Activated CD4-positive, alpha-beta T cell treated with anti-CD3 and anti-CD28 coated beads for 36 hours (primary cell): ENCODE measurements at regions of chr2 and their contacts with region 1.

Region 1: GRCh38 chr2:108594132-108594981 is 60.1 kb downstream of the LIMS1 start:
- DNase-seq: peak; percentile 25
- ATAC-seq: peak; percentile 86
- H3K4me3 Mint-ChIP-seq: peak overlapping the region; percentile 59
- H3K27ac Mint-ChIP-seq: peak overlapping the region; percentile 83
- H3K4me1 Mint-ChIP-seq: peaks cover 56% of the 10 kb centered on the region
- H3K27me3 Mint-ChIP-seq: no peaks in the 10 kb centered on the region

Region 2: DNA sequence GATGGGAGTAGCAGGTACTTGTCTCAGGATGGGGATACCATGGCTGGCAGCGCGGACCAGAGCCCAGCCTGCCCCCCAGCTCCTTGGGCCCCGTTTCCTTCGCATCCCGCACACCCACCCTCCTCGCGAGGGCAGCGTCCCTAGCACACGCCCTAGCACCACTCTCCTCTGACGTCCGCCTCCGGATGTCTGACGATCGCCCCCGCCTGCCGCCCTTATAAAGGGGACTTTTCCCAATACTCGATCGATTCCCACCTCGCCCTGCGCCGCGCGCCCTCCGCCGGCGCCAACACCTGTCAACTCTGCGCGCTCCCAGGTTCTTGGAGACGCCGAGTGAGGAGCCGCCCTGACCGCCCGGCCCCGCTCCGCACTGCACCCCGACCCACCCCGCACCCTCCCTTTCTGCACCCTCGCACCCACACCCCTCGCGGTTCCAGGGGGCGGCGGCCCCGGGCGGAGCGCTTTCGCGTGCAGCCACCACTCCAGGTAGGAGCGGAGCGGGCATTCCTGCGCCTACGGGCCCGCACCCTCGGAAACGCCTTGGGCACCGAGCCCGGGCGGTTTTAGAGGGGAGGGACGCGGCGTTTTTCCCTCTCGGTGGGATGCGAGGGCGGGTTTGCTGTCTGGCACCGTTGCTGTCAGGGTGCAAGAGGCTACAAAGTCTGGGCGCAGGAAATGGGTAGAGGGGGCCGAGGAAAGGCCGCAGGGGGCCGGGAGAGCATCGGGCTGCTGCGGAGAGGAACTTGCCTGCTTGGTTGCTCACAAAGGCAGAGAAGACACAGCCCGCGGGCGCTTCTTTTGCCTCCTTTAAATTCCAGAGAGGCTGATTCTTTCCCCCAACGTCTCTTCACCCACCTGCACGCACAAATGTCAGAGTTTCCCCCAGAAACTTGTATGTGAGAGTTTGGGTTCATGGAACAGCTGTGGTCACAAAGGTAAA is 607.8 kb before region 1 on chr2 and contains the start of gene SLC5A7:
- CTCF ChIA-PET with region 1: no interaction called
- POLR2A ChIA-PET with region 1: no interaction called
- intact Hi-C with region 1: no loop called
- DNase-seq: no peak
- ATAC-seq: no peak
- H3K4me3 Mint-ChIP-seq: no peak within 1 kb of the TSS
- H3K27ac Mint-ChIP-seq: no peak within 1 kb of the TSS
- H3K4me1 Mint-ChIP-seq: no peaks in the 10 kb centered on the region
- H3K27me3 Mint-ChIP-seq: peaks cover 16% of the 10 kb centered on the region
- total RNA-seq, gene SLC5A7: not detected

Region 3: DNA sequence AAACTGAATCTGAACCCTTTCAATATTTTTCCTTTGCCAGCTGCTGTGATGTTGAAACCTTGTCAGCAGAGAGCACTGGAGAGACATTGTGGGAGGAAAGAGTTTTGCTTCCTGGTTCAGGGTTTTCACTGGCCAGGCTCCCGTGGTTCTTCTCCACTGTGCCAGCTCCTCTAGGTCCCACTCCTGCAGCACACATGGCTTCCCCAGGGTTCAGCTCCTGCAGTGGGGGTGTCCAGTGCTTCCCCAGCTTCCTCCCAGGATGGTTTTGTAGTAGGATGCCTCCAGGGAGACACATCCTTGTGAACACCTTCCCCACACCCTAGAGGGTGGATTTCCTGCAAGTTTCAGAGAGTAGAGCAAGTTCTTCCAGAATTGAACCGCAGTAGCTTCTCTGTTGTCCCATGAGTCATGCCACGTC is 378.6 kb before region 1 on chr2:
- CTCF ChIA-PET with region 1: no interaction called
- POLR2A ChIA-PET with region 1: no interaction called
- intact Hi-C with region 1: no loop called
- DNase-seq: no peak
- ATAC-seq: no peak
- H3K4me3 Mint-ChIP-seq: no peak overlapping the region
- H3K27ac Mint-ChIP-seq: no peak overlapping the region
- H3K4me1 Mint-ChIP-seq: no peaks in the 10 kb centered on the region
- H3K27me3 Mint-ChIP-seq: peaks cover 5% of the 10 kb centered on the region

Region 4: GRCh38 chr2:108542071-108542470 is 52.3 kb before region 1 on chr2:
- CTCF ChIA-PET with region 1: no interaction called
- POLR2A ChIA-PET with region 1: no interaction called
- intact Hi-C with region 1: no loop called
- DNase-seq: no peak
- ATAC-seq: no peak
- H3K4me3 Mint-ChIP-seq: no peak overlapping the region
- H3K27ac Mint-ChIP-seq: peak overlapping the region; percentile 10
- H3K4me1 Mint-ChIP-seq: peaks cover 19% of the 10 kb centered on the region
- H3K27me3 Mint-ChIP-seq: no peaks in the 10 kb centered on the region

Region 5: DNA sequence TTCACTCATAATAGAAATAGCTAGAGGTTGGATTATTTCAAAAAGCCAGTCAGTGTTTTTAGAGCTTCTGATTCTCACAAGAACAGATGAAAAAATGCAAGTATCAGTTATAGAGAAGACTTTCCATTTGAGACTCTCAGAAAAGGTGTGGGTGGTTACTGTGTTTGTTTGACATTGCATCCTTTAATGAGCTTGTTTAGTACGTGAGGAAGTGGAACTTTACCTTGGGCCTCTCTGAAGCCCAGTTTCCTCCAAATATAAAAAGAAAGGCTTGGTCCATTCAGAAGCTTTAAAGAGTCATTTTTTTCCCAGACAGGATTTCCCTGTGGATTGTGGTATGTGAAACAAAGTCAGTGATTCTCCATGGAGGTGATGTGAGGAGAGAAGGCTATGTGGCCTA is 35.1 kb after region 1 on chr2:
- CTCF ChIA-PET with region 1: interaction called, 3 read pairs
- POLR2A ChIA-PET with region 1: no interaction called
- intact Hi-C with region 1: loop called in 1 of 2 experiments (anchors 5 kb)
- DNase-seq: no peak
- ATAC-seq: peak; percentile 66
- H3K4me3 Mint-ChIP-seq: peak overlapping the region; percentile 39
- H3K27ac Mint-ChIP-seq: peak overlapping the region; percentile 84
- H3K4me1 Mint-ChIP-seq: peaks cover 84% of the 10 kb centered on the region
- H3K27me3 Mint-ChIP-seq: no peaks in the 10 kb centered on the region

Region 6: DNA sequence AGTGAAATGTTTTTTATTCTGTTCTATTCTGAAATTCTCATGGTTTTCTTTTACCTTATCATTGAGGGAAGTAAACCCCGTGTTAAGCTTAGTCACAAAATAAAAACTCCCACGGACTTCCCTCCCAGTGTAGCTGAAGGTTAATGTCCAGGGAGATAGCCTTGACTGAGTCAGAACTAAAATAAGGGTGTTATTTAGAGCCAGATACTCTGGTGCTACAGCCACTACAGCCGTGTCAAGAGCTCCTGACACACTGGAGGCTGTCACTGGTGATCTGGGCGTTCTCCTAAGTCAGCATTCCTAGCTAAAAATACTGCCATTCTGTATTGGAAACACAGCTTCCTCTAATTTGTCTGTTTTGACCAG is 42.9 kb after region 1 on chr2:
- CTCF ChIA-PET with region 1: interaction called, 18 read pairs
- POLR2A ChIA-PET with region 1: interaction called, 3 read pairs
- intact Hi-C with region 1: loop called in 1 of 2 experiments (anchors 1 kb)
- DNase-seq: no peak
- ATAC-seq: no peak
- H3K4me3 Mint-ChIP-seq: no peak overlapping the region
- H3K27ac Mint-ChIP-seq: peak overlapping the region; percentile 60
- H3K4me1 Mint-ChIP-seq: peaks cover 73% of the 10 kb centered on the region
- H3K27me3 Mint-ChIP-seq: no peaks in the 10 kb centered on the region